ENCODE measurements at regions of chr4 and their contacts with region 1.

Region 1: DNA sequence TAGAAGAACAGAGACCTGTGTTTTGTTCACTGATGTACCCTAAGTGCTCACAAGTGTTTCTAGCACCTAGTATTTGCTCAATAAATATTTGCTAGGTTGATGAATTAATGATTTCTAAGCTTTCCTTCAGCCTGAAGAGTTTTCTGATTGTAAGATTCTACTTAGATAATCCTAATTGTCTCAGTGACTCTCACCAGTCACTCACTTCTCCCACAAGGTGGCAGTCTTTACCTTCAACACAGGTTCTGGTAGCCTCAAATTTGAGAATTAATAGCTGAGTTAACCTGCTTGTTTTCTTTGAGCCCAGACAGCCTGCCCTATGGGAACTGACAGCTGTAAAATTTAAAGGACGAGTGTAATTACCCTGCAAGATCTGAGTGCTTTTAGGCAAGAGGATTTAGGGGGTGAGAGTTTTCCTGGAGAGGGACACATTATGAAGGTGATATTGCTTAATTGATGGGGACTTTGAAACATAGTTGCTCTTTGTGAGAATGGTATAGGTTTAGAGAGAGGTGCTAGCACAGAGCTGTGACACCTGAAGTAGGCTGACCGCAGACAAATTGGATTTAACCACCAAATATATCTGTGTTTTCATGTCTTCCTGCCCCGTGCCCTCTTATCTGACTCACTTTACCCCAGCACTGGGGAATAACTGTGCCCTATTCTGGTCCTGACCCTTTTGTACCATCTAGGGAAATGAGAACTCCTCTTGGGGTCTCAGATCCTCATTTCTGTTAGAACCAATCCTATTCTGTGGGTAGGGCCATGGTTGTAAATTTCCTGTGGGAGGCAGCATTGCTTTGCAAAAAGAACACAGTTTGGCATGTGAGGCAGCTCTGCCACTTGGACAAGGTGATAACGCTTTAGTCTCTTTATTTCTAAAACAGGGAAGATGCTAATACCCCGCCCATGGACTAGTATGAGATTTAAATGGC is 27.7 kb downstream of the CD38 start:
- DNase-seq: peak; percentile 61
- ATAC-seq: peak; percentile 81
- H3K4me3 Mint-ChIP-seq: no peak overlapping the region
- H3K27ac Mint-ChIP-seq: no peak overlapping the region
- H3K4me1 Mint-ChIP-seq: peaks cover 19% of the 10 kb centered on the region
- H3K27me3 Mint-ChIP-seq: no peaks in the 10 kb centered on the region
- CTCF ChIP-seq: peak; percentile 78

Region 2: DNA sequence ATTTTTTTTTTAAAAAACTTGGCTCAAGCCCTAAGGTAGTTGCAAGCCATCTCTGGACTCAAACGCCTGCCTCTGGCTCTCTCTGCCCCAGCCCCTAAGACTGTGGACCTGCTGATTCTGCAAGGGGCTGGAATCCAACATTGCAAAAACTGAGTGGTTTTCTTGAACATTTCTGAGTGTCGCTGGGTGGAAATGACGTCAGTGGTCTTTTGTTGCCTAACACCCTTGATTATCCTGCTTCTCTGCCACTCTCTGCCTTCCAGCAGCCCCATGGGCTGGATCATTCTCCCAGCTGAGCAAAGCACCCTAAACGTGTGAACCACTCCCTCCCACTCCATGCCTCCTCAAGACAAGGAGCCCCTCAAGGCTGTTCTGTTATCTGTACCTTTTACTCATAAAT is 86.3 kb before region 1 on chr4:
- CTCF ChIA-PET with region 1: interaction called, 12 read pairs
- POLR2A ChIA-PET with region 1: no interaction called
- intact Hi-C with region 1: no loop called
- DNase-seq: no peak
- ATAC-seq: no peak
- H3K4me3 Mint-ChIP-seq: no peak overlapping the region
- H3K27ac Mint-ChIP-seq: no peak overlapping the region
- H3K4me1 Mint-ChIP-seq: no peaks in the 10 kb centered on the region
- H3K27me3 Mint-ChIP-seq: no peaks in the 10 kb centered on the region
- CTCF ChIP-seq: no peak

Region 3: DNA sequence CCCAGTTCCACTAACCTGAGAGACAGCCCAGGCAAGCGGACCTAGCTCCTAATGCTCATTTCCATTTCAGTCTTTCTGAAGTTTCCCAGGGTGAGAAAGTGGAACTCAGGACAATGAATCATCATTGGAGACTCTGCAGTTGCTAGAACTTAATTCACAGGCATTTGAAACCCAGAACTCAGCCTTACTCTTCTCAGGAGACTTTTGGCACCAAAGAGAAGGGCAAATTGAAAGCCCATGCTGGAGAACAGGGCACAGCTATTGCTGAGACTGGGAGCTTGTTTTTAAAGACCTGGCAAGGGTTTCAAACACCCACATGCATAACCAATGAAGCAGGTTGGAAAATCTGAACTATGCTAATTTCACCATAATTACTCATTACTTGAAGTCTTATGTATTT is 67.0 kb before region 1 on chr4:
- CTCF ChIA-PET with region 1: interaction called, 16 read pairs
- POLR2A ChIA-PET with region 1: interaction called, 4 read pairs
- intact Hi-C with region 1: loop called (anchors 5 kb)
- DNase-seq: peak; percentile 17
- ATAC-seq: peak; percentile 79
- H3K4me3 Mint-ChIP-seq: no peak overlapping the region
- H3K27ac Mint-ChIP-seq: peak overlapping the region; percentile 17
- H3K4me1 Mint-ChIP-seq: peaks cover 34% of the 10 kb centered on the region
- H3K27me3 Mint-ChIP-seq: no peaks in the 10 kb centered on the region
- CTCF ChIP-seq: no peak

Region 4: DNA sequence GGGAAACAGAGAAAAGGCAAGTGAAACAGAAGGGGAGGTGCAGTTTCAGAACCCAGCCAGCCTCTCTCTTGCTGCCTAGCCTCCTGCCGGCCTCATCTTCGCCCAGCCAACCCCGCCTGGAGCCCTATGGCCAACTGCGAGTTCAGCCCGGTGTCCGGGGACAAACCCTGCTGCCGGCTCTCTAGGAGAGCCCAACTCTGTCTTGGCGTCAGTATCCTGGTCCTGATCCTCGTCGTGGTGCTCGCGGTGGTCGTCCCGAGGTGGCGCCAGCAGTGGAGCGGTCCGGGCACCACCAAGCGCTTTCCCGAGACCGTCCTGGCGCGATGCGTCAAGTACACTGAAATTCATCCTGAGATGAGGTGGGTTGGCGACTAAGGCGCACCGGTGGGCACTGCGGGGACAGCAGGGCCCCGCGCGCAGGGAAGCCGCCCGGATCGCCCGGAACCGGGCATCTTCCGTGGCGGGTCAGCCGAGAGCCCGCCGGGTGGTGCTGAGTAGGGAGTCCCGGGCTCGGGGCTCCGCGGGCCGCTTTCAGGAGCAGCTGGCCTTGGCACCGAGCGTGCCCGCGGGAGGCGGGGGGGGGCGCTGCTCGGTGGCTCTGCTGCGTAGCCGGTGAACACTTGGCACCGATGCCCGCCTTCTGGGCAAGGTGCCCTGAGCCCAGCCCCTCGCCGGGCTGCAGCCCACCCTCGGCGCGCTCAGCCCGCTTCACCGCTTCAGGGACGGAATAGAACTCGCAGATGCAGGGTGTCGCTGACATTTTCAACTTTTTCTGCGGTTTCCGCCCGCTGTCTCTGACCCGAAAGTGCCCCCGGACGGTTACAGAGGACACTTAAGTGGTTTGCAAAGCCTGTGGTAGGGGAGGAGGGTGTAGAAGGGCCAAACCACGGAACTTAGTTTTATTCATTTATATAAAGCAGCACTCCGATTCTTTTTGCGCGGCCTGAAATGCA is 27.3 kb before region 1 on chr4 and contains the start of gene CD38:
- CTCF ChIA-PET with region 1: interaction called, 12 read pairs
- POLR2A ChIA-PET with region 1: interaction called, 3 read pairs
- intact Hi-C with region 1: no loop called
- DNase-seq: peak; percentile 84
- ATAC-seq: peak; percentile 81
- H3K4me3 Mint-ChIP-seq: peak within 1 kb of the TSS; percentile 85
- H3K27ac Mint-ChIP-seq: peak within 1 kb of the TSS; percentile 88
- H3K4me1 Mint-ChIP-seq: peaks cover 67% of the 10 kb centered on the region
- H3K27me3 Mint-ChIP-seq: peaks cover 15% of the 10 kb centered on the region
- CTCF ChIP-seq: no peak
- total RNA-seq, gene CD38: 24.3 to 25.6 TPM

Region 5: DNA sequence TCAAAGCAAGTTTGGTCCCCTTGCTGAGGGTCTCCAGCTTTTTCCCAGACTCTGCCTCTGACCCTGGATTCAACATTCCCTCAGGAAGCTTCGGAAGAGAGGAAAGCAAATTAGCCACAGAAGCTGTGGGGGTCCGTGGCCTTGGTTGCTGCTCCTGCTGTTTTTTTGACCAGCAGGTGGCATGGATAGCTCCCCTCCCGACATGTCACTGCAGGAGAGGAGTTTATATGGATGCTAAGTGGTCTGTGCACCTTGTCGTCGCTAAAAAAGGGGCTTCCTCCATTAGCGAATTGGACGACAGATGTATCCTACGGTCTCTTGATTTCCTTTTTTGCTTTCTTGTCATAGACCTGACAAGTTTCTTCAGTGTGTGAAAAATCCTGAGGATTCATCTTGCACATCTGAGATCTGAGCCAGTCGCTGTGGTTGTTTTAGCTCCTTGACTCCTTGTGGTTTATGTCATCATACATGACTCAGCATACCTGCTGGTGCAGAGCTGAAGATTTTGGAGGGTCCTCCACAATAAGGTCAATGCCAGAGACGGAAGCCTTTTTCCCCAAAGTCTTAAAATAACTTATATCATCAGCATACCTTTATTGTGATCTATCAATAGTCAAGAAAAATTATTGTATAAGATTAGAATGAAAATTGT is 42.5 kb after region 1 on chr4:
- CTCF ChIA-PET with region 1: interaction called, 15 read pairs
- POLR2A ChIA-PET with region 1: no interaction called
- intact Hi-C with region 1: no loop called
- DNase-seq: no peak
- ATAC-seq: no peak
- H3K4me3 Mint-ChIP-seq: no peak overlapping the region
- H3K27ac Mint-ChIP-seq: no peak overlapping the region
- H3K4me1 Mint-ChIP-seq: peaks cover 1% of the 10 kb centered on the region
- H3K27me3 Mint-ChIP-seq: no peaks in the 10 kb centered on the region
- CTCF ChIP-seq: no peak

Region 6: GRCh38 chr4:15956179-15956850 is 150.5 kb after region 1 on chr4:
- CTCF ChIA-PET with region 1: interaction called, 124 read pairs
- POLR2A ChIA-PET with region 1: no interaction called
- intact Hi-C with region 1: loop called (anchors 2 kb)
- DNase-seq: peak; percentile 96
- ATAC-seq: peak; percentile 90
- H3K4me3 Mint-ChIP-seq: no peak overlapping the region
- H3K27ac Mint-ChIP-seq: no peak overlapping the region
- H3K4me1 Mint-ChIP-seq: peaks cover 19% of the 10 kb centered on the region
- H3K27me3 Mint-ChIP-seq: peaks cover 2% of the 10 kb centered on the region
- CTCF ChIP-seq: peak; percentile 87

Region 7: GRCh38 chr4:16001484-16001858 is 195.6 kb after region 1 on chr4:
- CTCF ChIA-PET with region 1: interaction called, 36 read pairs
- POLR2A ChIA-PET with region 1: no interaction called
- intact Hi-C with region 1: loop called (anchors 5 kb)
- DNase-seq: peak; percentile 73
- ATAC-seq: peak; percentile 96
- H3K4me3 Mint-ChIP-seq: no peak overlapping the region
- H3K27ac Mint-ChIP-seq: no peak overlapping the region
- H3K4me1 Mint-ChIP-seq: peaks cover 3% of the 10 kb centered on the region
- H3K27me3 Mint-ChIP-seq: no peaks in the 10 kb centered on the region
- CTCF ChIP-seq: peak; percentile 77

Region 8: GRCh38 chr4:16034010-16034829 is 228.4 kb after region 1 on chr4:
- CTCF ChIA-PET with region 1: no interaction called
- POLR2A ChIA-PET with region 1: no interaction called
- intact Hi-C with region 1: no loop called
- DNase-seq: no peak
- ATAC-seq: no peak
- H3K4me3 Mint-ChIP-seq: no peak overlapping the region
- H3K27ac Mint-ChIP-seq: no peak overlapping the region
- H3K4me1 Mint-ChIP-seq: no peaks in the 10 kb centered on the region
- H3K27me3 Mint-ChIP-seq: peaks cover 2% of the 10 kb centered on the region
- CTCF ChIP-seq: no peak

Measured in activated CD8-positive, alpha-beta T cell treated with anti-CD3 and anti-CD28 coated beads for 36 hours (primary cell).